Mammary epithelial cell (primary cell): ENCODE measurements at regions of chr2 and their contacts with region 1.

Region 1: GRCh38 chr2:181058378-181059269 is 78.2 kb downstream of the UBE2E3 start:
- DNase-seq: peak; percentile 31
- H3K4me3 ChIP-seq: no peak overlapping the region
- H3K27ac ChIP-seq: no peak overlapping the region
- H3K4me1 ChIP-seq: peaks cover 7% of the 10 kb centered on the region
- H3K27me3 ChIP-seq: no peaks in the 10 kb centered on the region
- CTCF ChIP-seq: peak; percentile 70 to 74

Region 2: GRCh38 chr2:180359522-180360282 is 698.9 kb before region 1 on chr2:
- CTCF ChIA-PET with region 1: no interaction called
- dilution Hi-C with region 1: no loop called
- in situ Hi-C with region 1: loop called in 1 of 2 experiments (anchors 25 kb)
- intact Hi-C with region 1: no loop called
- DNase-seq: peak; percentile 90
- H3K4me3 ChIP-seq: no peak overlapping the region
- H3K27ac ChIP-seq: no peak overlapping the region
- H3K4me1 ChIP-seq: peaks cover 12% of the 10 kb centered on the region
- H3K27me3 ChIP-seq: no peaks in the 10 kb centered on the region
- CTCF ChIP-seq: peak in 1 of 2 donors; percentile 38

Region 3: GRCh38 chr2:180520206-180520605 is 538.4 kb before region 1 on chr2:
- CTCF ChIA-PET with region 1: no interaction called
- dilution Hi-C with region 1: no loop called
- in situ Hi-C with region 1: no loop called
- intact Hi-C with region 1: loop called (anchors 1 kb)
- DNase-seq: peak; percentile 36
- H3K4me3 ChIP-seq: no peak overlapping the region
- H3K27ac ChIP-seq: no peak overlapping the region
- H3K4me1 ChIP-seq: peaks cover 38% of the 10 kb centered on the region
- H3K27me3 ChIP-seq: no peaks in the 10 kb centered on the region
- CTCF ChIP-seq: peak in 1 of 2 donors; percentile 46

Region 4: DNA sequence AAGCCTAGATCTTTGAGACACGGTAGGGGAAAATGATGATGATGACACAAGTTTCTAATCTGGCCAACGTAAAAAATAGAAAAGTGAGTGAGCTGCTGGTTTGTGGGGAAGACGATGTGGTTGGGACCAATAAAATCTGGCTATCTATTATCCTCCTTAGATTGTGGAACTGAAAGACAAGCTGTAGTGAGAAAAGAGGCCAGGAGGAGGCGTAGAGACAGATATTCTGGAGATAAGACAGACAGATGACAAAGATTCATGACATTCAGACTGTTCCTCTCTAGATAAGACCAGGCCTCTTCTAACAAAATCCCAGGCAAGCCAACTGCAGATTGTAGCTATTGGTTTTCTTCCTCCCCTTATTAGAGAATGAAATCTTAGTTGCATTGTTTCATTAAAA is 454.5 kb before region 1 on chr2:
- CTCF ChIA-PET with region 1: interaction called, 6 read pairs
- dilution Hi-C with region 1: no loop called
- in situ Hi-C with region 1: no loop called
- intact Hi-C with region 1: loop called (anchors 1 kb)
- DNase-seq: peak; percentile 8
- H3K4me3 ChIP-seq: no peak overlapping the region
- H3K27ac ChIP-seq: no peak overlapping the region
- H3K4me1 ChIP-seq: no peaks in the 10 kb centered on the region
- H3K27me3 ChIP-seq: no peaks in the 10 kb centered on the region
- CTCF ChIP-seq: peak; percentile 56 to 57

Region 5: DNA sequence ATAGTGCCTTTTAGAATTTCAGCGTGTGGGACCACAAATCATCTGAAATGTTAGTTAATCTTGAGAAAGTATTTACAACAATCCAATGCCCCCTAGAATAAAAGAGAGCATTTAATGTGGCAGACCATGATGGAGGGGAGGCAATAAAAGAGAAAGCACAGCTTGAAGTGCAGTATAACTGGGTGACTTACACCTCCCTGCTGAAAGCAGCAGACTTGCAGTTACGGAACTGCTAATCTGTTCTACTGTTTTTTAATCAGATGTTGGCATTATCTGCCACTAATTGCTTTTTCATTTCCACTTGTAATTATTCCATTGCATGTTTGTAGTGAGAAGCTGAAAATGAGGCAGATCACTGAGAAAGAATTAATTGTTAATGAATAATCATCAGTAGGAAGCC is 268.0 kb after region 1 on chr2:
- CTCF ChIA-PET with region 1: no interaction called
- dilution Hi-C with region 1: no loop called
- in situ Hi-C with region 1: no loop called
- intact Hi-C with region 1: no loop called
- DNase-seq: no peak
- H3K4me3 ChIP-seq: no peak overlapping the region
- H3K27ac ChIP-seq: no peak overlapping the region
- H3K4me1 ChIP-seq: no peaks in the 10 kb centered on the region
- H3K27me3 ChIP-seq: no peaks in the 10 kb centered on the region
- CTCF ChIP-seq: no peak